HEK293T (cell line): ENCODE measurements at regions of chr16 and their contacts with region 1.

Region 1: GRCh38 chr16:77289331-77289809 is 90.2 kb downstream of the SYCE1L start:
- DNase-seq: no peak

Region 2: GRCh38 chr16:78816499-78817195 is 1527.3 kb after region 1 on chr16:
- CTCF ChIA-PET with region 1: interaction called, 11 read pairs
- POLR2A ChIA-PET with region 1: no interaction called
- DNase-seq: no peak